ENCODE measurements at regions of chr2 and their contacts with region 1.

Region 1: DNA sequence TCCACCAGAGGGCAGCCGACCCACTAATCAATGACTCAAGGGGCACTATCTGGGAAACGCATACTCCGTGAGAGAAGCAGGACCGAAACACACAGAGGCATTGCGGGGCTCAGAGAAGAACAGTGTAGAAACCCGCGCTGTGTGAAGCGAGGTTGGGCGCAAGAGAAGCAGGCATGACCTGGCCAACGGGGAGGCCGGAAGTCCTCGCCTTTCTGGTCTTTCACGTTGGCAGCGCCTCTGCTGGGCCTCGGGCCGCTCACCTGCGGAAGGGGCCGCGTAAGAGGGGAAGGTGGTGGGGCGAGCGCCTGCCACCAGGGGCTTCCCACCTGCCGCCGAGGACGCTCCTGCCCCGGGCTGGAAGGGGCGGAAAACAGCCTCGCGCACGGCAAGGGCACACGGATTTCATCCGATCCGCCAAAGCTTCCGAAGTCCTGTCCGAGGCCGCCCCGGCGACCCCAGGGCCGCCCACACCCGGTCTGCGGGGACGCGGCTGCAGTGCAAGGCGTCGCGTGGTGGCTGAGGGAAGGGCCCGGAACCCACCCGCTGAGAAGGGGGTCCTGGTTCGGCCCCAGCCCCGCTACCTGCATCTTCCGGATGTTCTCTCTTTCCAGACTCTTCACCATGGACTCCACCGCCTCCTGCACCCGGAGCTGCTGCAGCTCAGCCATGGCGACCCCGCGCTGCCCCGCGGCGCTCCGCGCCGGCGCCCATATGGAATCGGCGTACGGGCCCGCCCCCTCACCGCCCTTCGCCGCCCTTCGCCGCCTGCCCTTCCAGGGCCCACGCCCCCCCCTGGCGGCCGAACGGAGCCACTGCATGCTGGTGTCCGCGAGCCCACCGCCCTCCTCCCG is at the start of gene FAM136A:
- DNase-seq: peak; percentile 86
- H3K4me3 Mint-ChIP-seq: peak within 1 kb of the TSS; percentile 88
- H3K27ac Mint-ChIP-seq: peak within 1 kb of the TSS; percentile 90
- H3K4me1 Mint-ChIP-seq: peaks cover 31% of the 10 kb centered on the region
- H3K27me3 Mint-ChIP-seq: no peaks in the 10 kb centered on the region
- total RNA-seq, gene FAM136A: 71.3 and 71.8 TPM in 2 replicates

Region 2: GRCh38 chr2:70083344-70084156 is 218.0 kb before region 1 on chr2:
- intact Hi-C with region 1: no loop called
- DNase-seq: no peak
- H3K4me3 Mint-ChIP-seq: peak overlapping the region; percentile 71
- H3K27ac Mint-ChIP-seq: peak overlapping the region; percentile 89
- H3K4me1 Mint-ChIP-seq: peaks cover 58% of the 10 kb centered on the region
- H3K27me3 Mint-ChIP-seq: no peaks in the 10 kb centered on the region

Region 3: GRCh38 chr2:70616168-70616694 is 314.7 kb after region 1 on chr2:
- intact Hi-C with region 1: loop called (anchors 1 kb)
- DNase-seq: no peak
- H3K4me3 Mint-ChIP-seq: no peak overlapping the region
- H3K27ac Mint-ChIP-seq: no peak overlapping the region
- H3K4me1 Mint-ChIP-seq: peaks cover 2% of the 10 kb centered on the region
- H3K27me3 Mint-ChIP-seq: peaks cover 14% of the 10 kb centered on the region

Region 4: DNA sequence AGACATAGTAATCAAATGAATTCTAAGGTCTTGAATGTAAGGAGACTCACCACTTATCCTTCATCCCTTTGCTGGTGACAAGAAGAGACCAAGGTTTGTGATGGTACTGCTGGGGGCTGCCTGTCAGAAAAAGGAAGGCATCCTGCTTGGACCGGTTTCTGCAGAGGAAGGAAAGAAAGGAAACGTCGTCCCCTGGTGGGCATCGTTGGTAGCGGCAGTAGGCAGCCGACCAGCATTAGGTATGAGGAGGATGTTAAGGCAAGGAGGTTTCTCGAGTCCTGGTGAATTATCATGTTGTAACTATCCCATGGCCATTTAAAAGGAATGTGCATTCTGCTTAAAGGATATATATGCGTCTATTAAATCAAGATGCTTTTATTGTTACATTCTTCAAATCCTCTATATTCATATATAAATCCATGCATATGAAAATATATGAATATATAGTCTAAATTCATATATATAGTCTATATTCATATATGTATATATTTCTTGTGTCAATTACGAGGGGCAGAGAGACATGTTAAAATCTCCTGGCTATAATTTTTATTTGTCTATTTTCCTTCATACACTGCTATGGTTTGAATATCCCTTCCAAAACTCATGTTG is 346.4 kb after region 1 on chr2:
- intact Hi-C with region 1: loop called (anchors 1 kb)
- DNase-seq: peak; percentile 55
- H3K4me3 Mint-ChIP-seq: no peak overlapping the region
- H3K27ac Mint-ChIP-seq: no peak overlapping the region
- H3K4me1 Mint-ChIP-seq: no peaks in the 10 kb centered on the region
- H3K27me3 Mint-ChIP-seq: peaks cover 22% of the 10 kb centered on the region